MCF 10A (cell line): ENCODE measurements at regions of chr5 and their contacts with region 1.

Region 1: GRCh38 chr5:28473531-28474107 is 1435.2 kb upstream of the CDH9 start:
- DNase-seq: peak; percentile 34
- H3K4me3 Mint-ChIP-seq: no peak overlapping the region
- H3K27ac Mint-ChIP-seq: no peak overlapping the region
- H3K4me1 Mint-ChIP-seq: no peaks in the 10 kb centered on the region
- H3K27me3 Mint-ChIP-seq: no peaks in the 10 kb centered on the region
- CTCF ChIP-seq: no peak

Region 2: DNA sequence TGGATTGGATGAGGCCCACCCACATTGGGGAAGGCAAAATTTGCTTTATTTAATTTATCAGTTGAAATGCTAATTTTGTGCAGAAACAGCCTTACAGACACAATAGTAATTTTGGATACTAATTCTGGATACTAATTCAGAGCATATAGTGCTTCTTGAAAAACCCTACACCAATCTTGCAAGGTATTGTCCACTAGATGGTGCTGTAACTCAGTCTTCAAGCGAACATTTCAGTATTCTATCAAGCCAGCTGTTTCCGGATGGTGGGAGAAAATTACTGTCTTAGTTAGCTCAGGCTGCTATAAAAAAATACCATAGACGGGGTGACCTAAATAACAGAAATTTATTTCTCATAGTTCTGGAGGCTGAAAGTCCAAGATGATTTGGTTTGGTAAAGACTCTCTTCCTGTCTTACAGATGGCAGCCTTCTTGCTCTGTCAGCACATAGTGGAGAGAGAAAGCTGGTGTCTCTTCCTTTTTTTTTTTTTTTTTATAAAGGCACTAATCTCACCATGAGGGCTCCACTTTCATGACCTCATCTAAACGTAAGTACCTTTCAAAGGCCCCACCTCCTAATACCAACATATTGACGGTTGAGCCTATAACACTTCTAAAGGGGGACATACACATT is 128.7 kb before region 1 on chr5:
- CTCF ChIA-PET with region 1: interaction called, 29 read pairs
- POLR2A ChIA-PET with region 1: no interaction called
- intact Hi-C with region 1: loop called (anchors 2 kb)
- DNase-seq: peak; percentile 60
- H3K4me3 Mint-ChIP-seq: no peak overlapping the region
- H3K27ac Mint-ChIP-seq: no peak overlapping the region
- H3K4me1 Mint-ChIP-seq: no peaks in the 10 kb centered on the region
- H3K27me3 Mint-ChIP-seq: no peaks in the 10 kb centered on the region
- CTCF ChIP-seq: peak; percentile 64

Region 3: DNA sequence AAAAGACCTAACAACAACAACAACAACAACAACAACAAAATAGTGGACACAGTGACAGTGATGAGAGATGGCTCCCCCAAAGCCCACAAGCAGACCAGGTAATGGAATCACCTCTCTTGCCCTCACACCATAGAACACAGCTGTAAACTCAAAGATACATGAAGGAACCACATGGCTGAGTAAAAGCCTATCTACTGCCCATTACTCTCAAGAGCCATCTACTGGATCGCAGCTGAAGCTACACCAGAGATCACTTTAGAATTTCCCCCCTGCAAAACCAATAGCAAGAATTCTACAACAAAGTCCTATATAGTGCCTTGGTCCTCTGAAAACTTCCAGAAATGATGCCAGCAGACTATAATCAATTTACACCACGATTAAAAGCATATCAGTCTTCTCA is 102.4 kb after region 1 on chr5:
- CTCF ChIA-PET with region 1: interaction called, 17 read pairs
- POLR2A ChIA-PET with region 1: no interaction called
- intact Hi-C with region 1: no loop called
- DNase-seq: peak; percentile 22
- H3K4me3 Mint-ChIP-seq: no peak overlapping the region
- H3K27ac Mint-ChIP-seq: no peak overlapping the region
- H3K4me1 Mint-ChIP-seq: peaks cover 25% of the 10 kb centered on the region
- H3K27me3 Mint-ChIP-seq: no peaks in the 10 kb centered on the region
- CTCF ChIP-seq: peak; percentile 25